ENCODE measurements at regions of chr20 and their contacts with region 1.

Region 1: GRCh38 chr20:22339091-22339881 is 245.1 kb downstream of the FOXA2 start:
- DNase-seq: no peak
- H3K4me3 ChIP-seq: no peak overlapping the region
- CTCF ChIP-seq: peak; percentile 60

Region 2: DNA sequence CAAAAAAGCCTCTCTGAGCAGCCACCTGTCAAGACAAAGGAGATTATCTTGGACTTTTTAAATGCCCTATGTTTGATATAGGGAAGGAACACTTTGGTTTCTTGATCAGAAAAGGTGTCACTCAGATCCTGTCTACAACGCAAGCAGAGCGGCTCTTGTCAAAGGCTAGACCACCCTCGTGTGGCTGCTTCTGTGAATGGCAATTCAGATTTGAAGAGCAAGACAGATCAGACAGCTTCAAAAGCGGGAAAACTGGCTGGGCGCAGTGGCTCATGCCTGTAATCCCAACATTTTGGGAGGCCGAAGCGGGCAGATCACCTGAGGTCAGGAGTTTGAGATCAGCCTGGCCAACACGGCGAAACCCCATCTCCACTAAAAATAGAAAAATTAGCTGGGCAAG is 1001.2 kb after region 1 on chr20:
- CTCF ChIA-PET with region 1: interaction called, 17 read pairs
- POLR2A ChIA-PET with region 1: no interaction called
- DNase-seq: peak; percentile 21
- H3K4me3 ChIP-seq: no peak overlapping the region
- CTCF ChIP-seq: peak; percentile 71